Motor neuron (in vitro differentiated cells): ENCODE measurements at regions of chr19 and their contacts with region 1.

Region 1: GRCh38 chr19:36363845-36364244 is 15.2 kb downstream of the ZFP14 start:
- ATAC-seq: no peak
- H3K4me3 ChIP-seq: no peak overlapping the region
- H3K27ac ChIP-seq: no peak overlapping the region
- H3K4me1 ChIP-seq: no peaks in the 10 kb centered on the region

Region 2: DNA sequence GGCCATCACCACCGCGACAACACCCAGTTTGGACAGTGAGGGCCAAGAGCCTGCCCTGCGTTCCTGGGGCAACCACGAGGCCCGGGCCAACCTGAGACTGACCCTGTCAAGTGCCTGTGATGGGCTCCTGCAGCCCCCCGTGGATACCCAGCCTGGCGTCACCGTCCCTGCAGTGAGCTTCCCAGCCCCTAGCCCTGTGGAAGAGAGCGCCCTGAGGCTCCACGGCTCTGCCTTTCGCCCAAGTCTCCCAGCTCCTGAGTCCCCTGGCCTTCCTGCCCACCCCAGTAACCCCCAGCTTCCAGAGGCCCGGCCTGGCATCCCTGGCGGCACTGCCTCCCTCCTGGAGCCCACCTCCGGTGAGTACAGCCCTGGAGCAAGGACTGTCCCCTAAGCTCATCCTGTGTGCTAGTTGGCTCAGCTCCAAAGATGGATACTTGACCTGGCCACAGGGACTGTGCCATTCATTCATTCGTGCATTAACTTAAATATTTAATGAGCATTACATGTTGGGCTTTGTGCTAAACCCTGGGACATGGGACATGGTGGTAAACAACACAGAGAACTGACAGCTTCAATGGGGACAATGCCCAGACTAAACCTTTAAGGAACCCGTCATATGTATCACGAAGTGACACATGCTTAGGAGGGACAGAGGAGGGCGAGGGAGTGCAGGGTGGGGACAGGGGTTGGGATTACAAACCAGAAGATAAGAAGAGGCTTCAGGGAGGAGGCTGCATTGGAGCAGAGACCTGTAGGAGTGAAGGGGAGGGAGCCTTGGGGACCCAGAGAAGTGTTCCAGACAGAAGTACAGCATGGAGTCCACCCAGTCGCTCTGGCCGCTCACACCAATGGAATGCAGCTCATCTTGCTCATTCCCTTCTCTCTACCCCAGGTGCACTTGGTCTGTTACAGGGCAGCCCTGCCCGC is 260.0 kb before region 1 on chr19:
- in situ Hi-C with region 1: no loop called
- ATAC-seq: peak in 2 of 8 experiments; percentile 8 to 38
- H3K4me3 ChIP-seq: no peak overlapping the region
- H3K27ac ChIP-seq: no peak overlapping the region
- H3K4me1 ChIP-seq: no peaks in the 10 kb centered on the region

Region 3: DNA sequence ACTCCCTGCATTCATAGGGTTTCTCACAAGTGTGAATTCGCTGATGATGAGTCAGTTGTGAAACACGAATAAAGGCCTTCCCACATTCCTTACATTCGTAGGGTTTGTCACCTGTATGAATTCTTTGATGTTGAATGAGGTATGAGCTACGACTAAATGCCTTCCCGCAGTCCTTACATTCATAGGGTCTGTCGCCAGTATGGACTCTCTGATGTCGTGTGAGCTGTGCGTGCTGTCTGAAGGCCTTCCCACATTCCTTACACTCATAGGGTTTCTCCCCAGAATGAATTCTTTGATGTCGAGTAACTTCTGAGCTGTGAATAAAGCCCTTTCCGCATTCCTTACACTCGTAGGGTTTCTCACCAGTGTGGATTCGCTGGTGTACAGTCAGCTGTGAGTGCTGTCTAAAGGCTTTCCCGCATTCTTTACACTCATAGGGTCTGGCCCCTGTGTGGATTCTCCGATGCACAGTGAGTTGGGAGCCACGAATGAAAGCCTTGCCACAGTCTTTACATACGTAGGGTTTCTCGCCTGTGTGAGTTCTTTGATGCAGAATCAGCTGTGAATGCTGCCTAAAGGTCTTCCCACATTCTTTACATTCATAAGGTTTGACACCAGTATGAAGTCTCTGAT is 181.1 kb before region 1 on chr19:
- in situ Hi-C with region 1: no loop called
- ATAC-seq: peak in 1 of 8 experiments; percentile 23
- H3K4me3 ChIP-seq: no peak overlapping the region
- H3K27ac ChIP-seq: no peak overlapping the region
- H3K4me1 ChIP-seq: no peaks in the 10 kb centered on the region

Region 4: GRCh38 chr19:36245210-36246005 is 118.4 kb before region 1 on chr19:
- in situ Hi-C with region 1: loop called in 2 of 9 experiments (anchors 25 kb)
- ATAC-seq: peak in 4 of 8 experiments; percentile 14 to 65 (median 26)
- H3K4me3 ChIP-seq: no peak overlapping the region
- H3K27ac ChIP-seq: no peak overlapping the region
- H3K4me1 ChIP-seq: no peaks in the 10 kb centered on the region

Region 5: DNA sequence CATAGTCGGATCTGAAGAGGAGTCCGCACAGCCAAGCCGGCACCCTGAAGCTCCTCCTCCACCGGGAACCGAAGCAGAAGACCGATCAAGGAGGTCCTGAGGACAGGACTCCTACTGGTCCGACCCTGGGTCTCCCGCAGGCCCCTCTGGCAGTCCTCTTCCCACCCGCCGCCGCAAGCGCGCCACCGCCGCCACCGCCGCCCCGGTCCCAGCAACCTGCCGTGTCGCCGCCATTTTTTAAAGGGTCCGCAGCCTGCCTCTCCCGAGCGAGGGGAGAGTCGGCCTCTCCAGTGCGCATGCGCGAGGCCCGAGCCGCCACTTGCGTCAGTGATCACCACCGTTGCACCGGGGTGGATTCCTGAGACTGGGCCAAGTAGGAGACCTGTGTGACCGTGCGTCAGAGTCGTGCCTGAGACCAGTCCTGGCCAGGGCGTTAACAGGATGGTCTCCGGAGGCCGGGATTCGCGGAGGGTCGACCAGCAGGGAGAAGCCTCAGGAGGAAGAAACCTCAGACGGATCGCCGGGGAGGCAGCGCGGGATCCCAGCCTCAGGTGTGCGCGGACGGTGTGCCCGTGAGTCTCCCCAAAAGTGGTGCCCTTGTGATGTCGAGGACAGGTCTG is 97.4 kb before region 1 on chr19:
- in situ Hi-C with region 1: no loop called
- ATAC-seq: peak in 1 of 8 experiments; percentile 81
- H3K4me3 ChIP-seq: peak overlapping the region in 1 of 5 donors; percentile 35
- H3K27ac ChIP-seq: no peak overlapping the region
- H3K4me1 ChIP-seq: no peaks in the 10 kb centered on the region

Region 6: GRCh38 chr19:36528194-36528920 is 164.5 kb after region 1 on chr19 and contains the start of gene ZNF260:
- in situ Hi-C with region 1: no loop called
- ATAC-seq: peak; percentile 88 to 97 (median 96)
- H3K4me3 ChIP-seq: peak within 1 kb of the TSS; percentile 54 to 75 (median 57)
- H3K27ac ChIP-seq: peak within 1 kb of the TSS; percentile 88 to 90
- H3K4me1 ChIP-seq: peaks cover 4 to 8% of the 10 kb centered on the region in 2 donors
- total RNA-seq, gene ZNF260: 7.8 to 38.1 (median 28.4) TPM